Heart left ventricle (tissue), 16 donors: ENCODE measurements at regions of chr19 and their contacts with region 1.

Region 1: DNA sequence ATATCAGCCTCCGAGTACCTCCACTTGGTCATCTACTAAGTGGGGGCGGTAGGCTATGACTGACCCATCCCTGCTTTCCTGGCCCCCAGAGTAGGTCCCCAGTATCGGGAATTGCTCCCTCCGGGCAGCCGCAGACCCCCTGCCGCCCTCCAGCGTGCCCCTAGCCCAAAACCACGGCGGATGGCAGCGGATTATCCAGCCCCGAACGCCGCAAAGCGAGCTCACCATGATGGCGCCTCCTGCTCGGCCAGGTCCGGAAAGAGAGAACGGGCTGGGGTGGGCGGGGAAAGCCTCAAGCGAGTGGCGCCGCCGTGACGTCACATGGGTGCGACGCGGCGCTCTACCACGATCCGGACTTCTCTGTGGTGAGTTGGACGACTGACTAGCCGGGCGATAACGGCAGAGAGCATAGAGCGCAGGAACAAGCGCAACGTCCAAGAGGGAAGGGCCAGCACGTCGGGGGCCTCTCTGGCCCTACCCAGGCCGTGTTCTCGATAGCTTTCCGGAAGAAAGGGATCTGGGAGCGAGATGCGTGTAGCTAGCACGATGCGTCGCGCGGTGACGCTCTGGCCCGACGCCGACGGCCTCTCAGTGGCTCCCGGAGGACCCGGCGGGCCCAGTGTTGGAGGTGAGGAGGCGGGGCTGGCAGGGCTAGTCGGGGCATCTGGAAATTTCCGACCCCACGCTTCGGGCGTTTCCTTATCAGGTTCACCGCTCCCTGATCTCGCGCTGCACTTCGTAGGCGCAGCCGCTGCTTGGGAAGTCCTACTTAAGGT is at the starts of genes RPL18 and SPHK2:
- DNase-seq: peak; percentile 98 to 99 (median 98)
- ATAC-seq: peak; percentile 90 to 95 (median 94)
- H3K4me3 ChIP-seq: peak within 1 kb of the TSS; percentile 59 to 97 (median 88)
- H3K27ac ChIP-seq: peak within 1 kb of the TSS; percentile 81 to 95 (median 92)
- H3K4me1 ChIP-seq: peaks cover 12 to 67% (median 35%) of the 10 kb centered on the region in 12 donors
- H3K27me3 ChIP-seq: peaks cover 0 to 6% (median 0%) of the 10 kb centered on the region in 9 donors
- CTCF ChIP-seq: peak in 1 of 12 donors; percentile 20
- POLR2A ChIP-seq: peak in 1 of 2 donors; percentile 88
- total RNA-seq, gene RPL18: 470 to 877 (median 692) TPM
- total RNA-seq, gene SPHK2: 5.6 to 13.1 (median 8.6) TPM

Region 2: GRCh38 chr19:48381178-48381950 is 237.7 kb before region 1 on chr19:
- intact Hi-C with region 1: loop called in 1 of 10 experiments (anchors 10 kb)
- DNase-seq: no peak
- ATAC-seq: no peak
- H3K4me3 ChIP-seq: no peak overlapping the region
- H3K27ac ChIP-seq: no peak overlapping the region
- H3K4me1 ChIP-seq: no peaks in the 10 kb centered on the region
- H3K27me3 ChIP-seq: no peaks in the 10 kb centered on the region
- CTCF ChIP-seq: no peak
- POLR2A ChIP-seq: no peak

Region 3: DNA sequence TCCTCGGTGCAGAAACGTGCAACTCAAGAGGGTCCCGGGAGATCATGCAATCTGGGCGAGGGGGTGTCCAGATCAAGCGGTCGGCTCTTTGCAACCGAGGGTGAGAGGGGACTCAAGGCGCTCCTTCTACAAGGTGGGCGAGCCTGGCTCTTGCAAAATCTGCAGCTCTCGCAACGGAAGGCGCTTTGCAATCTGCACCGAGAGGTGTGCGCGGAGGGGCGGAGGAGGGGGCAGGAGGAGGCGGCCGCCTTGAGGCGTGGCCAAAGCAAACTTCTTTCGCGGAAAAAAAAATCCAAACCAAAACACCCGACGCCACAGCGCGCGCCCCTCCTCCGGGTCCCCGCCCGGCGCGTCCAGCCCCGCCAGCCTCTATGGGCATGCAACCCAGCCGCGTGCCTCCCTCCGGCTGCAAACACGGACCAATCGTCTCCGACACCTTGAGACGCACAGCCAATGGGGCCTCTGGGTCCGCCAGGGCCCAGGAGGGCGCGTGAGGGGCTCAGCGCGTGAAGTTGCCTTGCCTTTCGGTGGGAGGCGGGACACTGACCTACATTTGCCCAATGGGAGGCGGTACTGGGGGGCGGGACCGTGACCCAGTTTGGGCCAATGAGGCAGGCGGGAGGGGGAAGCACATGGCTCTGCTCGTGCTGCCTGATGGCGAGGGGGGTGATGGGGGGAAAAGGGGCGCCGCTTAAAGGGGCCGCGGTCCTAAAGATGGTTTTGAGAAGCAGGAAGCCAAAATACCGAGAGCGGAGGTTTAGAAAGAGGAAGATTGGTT is 18.3 kb after region 1 on chr19 and contains the start of gene DBP:
- intact Hi-C with region 1: loop called in 1 of 10 experiments (anchors 2 kb)
- DNase-seq: peak; percentile 100
- ATAC-seq: peak; percentile 78 to 87 (median 84)
- H3K4me3 ChIP-seq: peak within 1 kb of the TSS; percentile 19 to 93 (median 78)
- H3K27ac ChIP-seq: peak within 1 kb of the TSS; percentile 85 to 100 (median 96)
- H3K4me1 ChIP-seq: peaks cover 16 to 55% (median 37%) of the 10 kb centered on the region in 12 donors
- H3K27me3 ChIP-seq: no peaks in the 10 kb centered on the region
- CTCF ChIP-seq: no peak
- POLR2A ChIP-seq: no peak
- total RNA-seq, gene DBP: 1.4 to 34.2 (median 12.5) TPM